Activated CD4-positive, alpha-beta T cell treated with anti-CD3 and anti-CD28 coated beads for 36 hours (primary cell): ENCODE measurements at regions of chr7 and their contacts with region 1.

Region 1: DNA sequence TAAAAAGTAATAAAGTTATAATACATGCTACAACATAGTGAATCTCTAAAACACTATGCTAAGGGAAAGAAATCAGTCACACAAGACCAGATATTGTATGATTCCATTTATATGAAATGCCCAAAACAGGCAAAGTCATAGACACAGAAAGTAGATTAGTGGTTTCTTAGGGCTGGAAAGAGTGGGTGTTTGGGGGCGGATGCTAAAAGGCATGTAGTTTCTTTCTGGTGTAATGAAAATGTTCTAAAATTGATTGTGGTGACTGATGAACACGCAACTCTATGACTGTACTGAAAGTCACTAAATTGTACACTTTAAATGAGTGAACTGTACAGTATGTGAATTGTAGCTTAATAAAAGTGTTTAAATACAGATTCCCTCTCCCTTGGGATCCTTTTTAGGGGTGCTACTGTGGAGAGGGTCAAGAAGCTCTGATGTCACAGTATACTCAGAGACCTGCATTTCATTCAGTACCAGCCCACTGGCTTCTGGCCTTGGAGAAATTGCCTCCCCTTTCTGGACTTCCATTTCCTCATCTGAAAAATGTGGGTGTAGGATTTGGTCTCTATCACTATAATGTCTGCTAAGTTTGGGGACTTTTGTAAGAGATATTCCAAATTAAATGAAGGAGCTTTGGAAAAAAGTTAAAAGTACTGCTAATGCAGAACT is 46.4 kb downstream of the AOAH start:
- DNase-seq: peak; percentile 86
- ATAC-seq: peak; percentile 91
- H3K4me3 Mint-ChIP-seq: peak overlapping the region; percentile 51
- H3K27ac Mint-ChIP-seq: peak overlapping the region; percentile 94
- H3K4me1 Mint-ChIP-seq: peaks cover 73% of the 10 kb centered on the region
- H3K27me3 Mint-ChIP-seq: no peaks in the 10 kb centered on the region

Region 2: DNA sequence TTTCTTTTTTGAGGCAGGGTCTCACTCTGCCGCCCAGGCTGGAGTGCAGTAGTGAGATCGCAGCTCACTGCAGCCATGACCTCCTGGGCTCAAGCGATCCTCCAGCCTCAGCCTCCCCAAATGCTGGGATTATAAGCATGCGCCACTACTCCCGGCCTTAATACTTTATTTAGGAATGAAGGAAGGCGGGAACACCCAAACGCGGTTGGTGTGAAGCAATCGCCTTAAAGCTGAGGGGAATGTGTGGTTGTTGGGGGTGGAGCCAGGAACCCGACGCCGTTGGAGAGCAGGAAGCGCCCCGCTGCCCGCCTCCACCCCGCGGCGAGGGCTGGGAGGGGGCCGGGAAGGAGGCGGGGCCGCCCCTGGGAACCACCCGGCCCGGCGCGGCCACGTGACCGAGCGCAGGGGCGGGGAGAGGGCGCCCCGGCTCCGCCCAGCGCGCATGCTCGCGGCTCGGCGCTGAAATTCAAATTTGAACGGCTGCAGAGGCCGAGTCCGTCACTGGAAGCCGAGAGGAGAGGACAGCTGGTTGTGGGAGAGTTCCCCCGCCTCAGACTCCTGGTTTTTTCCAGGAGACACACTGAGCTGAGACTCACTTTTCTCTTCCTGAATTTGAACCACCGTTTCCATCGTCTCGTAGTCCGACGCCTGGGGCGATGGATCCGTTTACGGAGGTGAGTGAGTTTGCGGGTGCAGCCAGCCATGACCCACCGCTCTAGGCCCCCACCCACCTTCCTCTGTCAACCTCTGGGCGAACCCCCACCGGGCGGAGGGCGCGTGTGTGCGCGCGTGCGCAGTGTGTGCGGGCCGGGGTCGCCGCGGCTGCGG is 288.3 kb before region 1 on chr7 and contains the start of gene ANLN:
- CTCF ChIA-PET with region 1: no interaction called
- POLR2A ChIA-PET with region 1: no interaction called
- intact Hi-C with region 1: loop called in 1 of 2 experiments (anchors 2 kb)
- DNase-seq: peak; percentile 92
- ATAC-seq: peak; percentile 86
- H3K4me3 Mint-ChIP-seq: peak within 1 kb of the TSS; percentile 87
- H3K27ac Mint-ChIP-seq: peak within 1 kb of the TSS; percentile 83
- H3K4me1 Mint-ChIP-seq: peaks cover 26% of the 10 kb centered on the region
- H3K27me3 Mint-ChIP-seq: peaks cover 8% of the 10 kb centered on the region
- total RNA-seq, gene ANLN: 52.5 to 58.3 TPM

Region 3: DNA sequence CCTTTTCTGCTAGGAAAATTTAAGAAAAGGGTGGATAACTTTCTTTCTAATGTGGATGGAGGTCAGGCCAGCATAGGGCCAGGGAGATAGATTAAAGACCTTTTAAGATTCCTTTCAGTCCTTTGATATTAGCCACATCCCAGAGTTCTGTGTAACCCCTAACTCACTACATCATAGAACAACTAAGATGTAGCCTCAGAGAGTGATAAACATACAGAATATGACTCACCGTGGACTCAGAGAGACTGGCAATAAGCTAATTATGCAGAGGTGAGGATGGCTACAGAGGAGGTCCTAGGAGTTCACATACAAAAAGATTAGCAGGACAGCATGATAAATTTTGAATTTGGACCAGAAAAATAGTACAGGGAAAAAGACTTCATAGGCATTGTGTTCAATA is 94.6 kb before region 1 on chr7:
- CTCF ChIA-PET with region 1: no interaction called
- POLR2A ChIA-PET with region 1: no interaction called
- intact Hi-C with region 1: loop called in 1 of 2 experiments (anchors 2 kb)
- DNase-seq: no peak
- ATAC-seq: peak; percentile 87
- H3K4me3 Mint-ChIP-seq: no peak overlapping the region
- H3K27ac Mint-ChIP-seq: peak overlapping the region; percentile 79
- H3K4me1 Mint-ChIP-seq: peaks cover 19% of the 10 kb centered on the region
- H3K27me3 Mint-ChIP-seq: no peaks in the 10 kb centered on the region

Region 4: GRCh38 chr7:36707465-36707864 is 29.6 kb after region 1 on chr7:
- CTCF ChIA-PET with region 1: interaction called, 4 read pairs
- POLR2A ChIA-PET with region 1: no interaction called
- intact Hi-C with region 1: loop called in 1 of 2 experiments (anchors 1 kb)
- DNase-seq: no peak
- ATAC-seq: peak; percentile 67
- H3K4me3 Mint-ChIP-seq: peak overlapping the region; percentile 37
- H3K27ac Mint-ChIP-seq: peak overlapping the region; percentile 91
- H3K4me1 Mint-ChIP-seq: peaks cover 70% of the 10 kb centered on the region
- H3K27me3 Mint-ChIP-seq: no peaks in the 10 kb centered on the region

Region 5: GRCh38 chr7:36784991-36785940 is 107.4 kb after region 1 on chr7:
- CTCF ChIA-PET with region 1: interaction called, 4 read pairs
- POLR2A ChIA-PET with region 1: no interaction called
- intact Hi-C with region 1: loop called (anchors 2 to 5 kb)
- DNase-seq: peak; percentile 67
- ATAC-seq: peak; percentile 83
- H3K4me3 Mint-ChIP-seq: no peak overlapping the region
- H3K27ac Mint-ChIP-seq: peak overlapping the region; percentile 56
- H3K4me1 Mint-ChIP-seq: peaks cover 78% of the 10 kb centered on the region
- H3K27me3 Mint-ChIP-seq: no peaks in the 10 kb centered on the region

Region 6: DNA sequence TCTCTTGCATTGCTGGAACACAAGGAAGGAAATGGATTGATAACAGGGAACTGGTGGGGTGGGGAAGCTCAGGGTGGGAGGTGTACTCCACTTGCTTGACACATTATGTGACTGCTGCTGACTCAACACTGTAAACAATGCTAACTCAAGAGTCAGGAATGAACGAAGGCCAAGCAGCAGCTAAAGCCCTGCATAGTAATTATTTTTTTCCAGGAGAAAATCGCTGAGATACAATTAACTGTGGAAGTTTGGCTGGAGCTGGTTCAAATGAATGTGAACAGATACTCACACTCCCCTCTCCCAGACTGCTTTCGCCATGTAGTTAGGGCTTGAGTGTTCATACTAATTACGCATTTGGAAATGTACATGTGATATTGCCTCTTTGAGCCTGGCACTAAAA is 217.3 kb after region 1 on chr7:
- CTCF ChIA-PET with region 1: no interaction called
- POLR2A ChIA-PET with region 1: no interaction called
- intact Hi-C with region 1: no loop called
- DNase-seq: no peak
- ATAC-seq: no peak
- H3K4me3 Mint-ChIP-seq: no peak overlapping the region
- H3K27ac Mint-ChIP-seq: no peak overlapping the region
- H3K4me1 Mint-ChIP-seq: peaks cover 14% of the 10 kb centered on the region
- H3K27me3 Mint-ChIP-seq: no peaks in the 10 kb centered on the region

Region 7: GRCh38 chr7:36962367-36962766 is 284.5 kb after region 1 on chr7:
- CTCF ChIA-PET with region 1: no interaction called
- POLR2A ChIA-PET with region 1: no interaction called
- intact Hi-C with region 1: loop called (anchors 5 kb)
- DNase-seq: no peak
- ATAC-seq: no peak
- H3K4me3 Mint-ChIP-seq: no peak overlapping the region
- H3K27ac Mint-ChIP-seq: no peak overlapping the region
- H3K4me1 Mint-ChIP-seq: peaks cover 55% of the 10 kb centered on the region
- H3K27me3 Mint-ChIP-seq: no peaks in the 10 kb centered on the region

Region 8: DNA sequence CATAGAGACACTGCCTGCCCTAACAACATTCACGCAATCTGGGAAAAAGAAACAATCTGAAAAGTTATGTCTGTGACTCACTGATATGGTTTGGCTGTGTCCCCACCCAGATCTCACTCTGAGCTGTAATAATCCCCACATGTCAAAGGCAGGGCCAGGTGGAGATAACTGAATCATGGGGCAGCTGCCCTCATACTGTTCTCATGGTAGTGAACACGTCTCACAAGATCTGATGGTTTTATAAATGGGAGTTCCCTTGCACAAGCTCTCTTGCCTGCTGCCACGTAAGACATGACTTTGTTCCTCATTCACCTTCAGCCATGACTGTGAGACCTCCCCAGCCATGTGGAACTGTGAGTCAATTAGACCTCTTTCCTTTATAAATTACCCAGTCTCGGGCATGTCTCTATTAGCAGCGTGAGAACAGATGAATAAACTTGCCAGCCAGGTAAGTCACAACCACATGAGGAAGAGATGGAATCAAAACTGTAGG is 387.9 kb after region 1 on chr7:
- CTCF ChIA-PET with region 1: no interaction called
- POLR2A ChIA-PET with region 1: no interaction called
- intact Hi-C with region 1: loop called in 1 of 2 experiments (anchors 5 kb)
- DNase-seq: peak; percentile 71
- ATAC-seq: peak; percentile 86
- H3K4me3 Mint-ChIP-seq: peak overlapping the region; percentile 20
- H3K27ac Mint-ChIP-seq: peak overlapping the region; percentile 88
- H3K4me1 Mint-ChIP-seq: peaks cover 70% of the 10 kb centered on the region
- H3K27me3 Mint-ChIP-seq: no peaks in the 10 kb centered on the region